ENCODE measurements at regions of chr1 and their contacts with region 1.

Region 1: DNA sequence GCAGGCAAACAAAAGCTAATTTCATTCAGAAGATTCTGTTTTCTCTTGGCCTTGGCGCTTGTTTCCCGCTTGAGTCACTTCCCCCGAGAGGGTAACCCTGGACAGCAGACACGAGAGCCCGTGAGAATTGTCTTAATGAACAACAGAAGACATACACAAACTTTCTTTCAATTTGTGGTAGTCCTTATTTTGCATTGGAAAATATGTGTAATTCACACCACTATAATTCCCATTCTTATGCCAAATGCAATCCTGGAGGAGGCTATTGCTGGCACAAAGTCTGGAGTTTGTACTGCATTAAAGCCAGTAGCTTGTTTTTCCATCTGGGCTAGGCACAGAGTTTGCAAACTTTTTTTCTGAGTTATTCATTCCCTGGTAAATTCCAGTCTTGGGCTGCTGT is 109.8 kb upstream of the IVNS1ABP start:
- DNase-seq: no peak
- H3K4me3 ChIP-seq: no peak overlapping the region
- CTCF ChIP-seq: no peak

Region 2: DNA sequence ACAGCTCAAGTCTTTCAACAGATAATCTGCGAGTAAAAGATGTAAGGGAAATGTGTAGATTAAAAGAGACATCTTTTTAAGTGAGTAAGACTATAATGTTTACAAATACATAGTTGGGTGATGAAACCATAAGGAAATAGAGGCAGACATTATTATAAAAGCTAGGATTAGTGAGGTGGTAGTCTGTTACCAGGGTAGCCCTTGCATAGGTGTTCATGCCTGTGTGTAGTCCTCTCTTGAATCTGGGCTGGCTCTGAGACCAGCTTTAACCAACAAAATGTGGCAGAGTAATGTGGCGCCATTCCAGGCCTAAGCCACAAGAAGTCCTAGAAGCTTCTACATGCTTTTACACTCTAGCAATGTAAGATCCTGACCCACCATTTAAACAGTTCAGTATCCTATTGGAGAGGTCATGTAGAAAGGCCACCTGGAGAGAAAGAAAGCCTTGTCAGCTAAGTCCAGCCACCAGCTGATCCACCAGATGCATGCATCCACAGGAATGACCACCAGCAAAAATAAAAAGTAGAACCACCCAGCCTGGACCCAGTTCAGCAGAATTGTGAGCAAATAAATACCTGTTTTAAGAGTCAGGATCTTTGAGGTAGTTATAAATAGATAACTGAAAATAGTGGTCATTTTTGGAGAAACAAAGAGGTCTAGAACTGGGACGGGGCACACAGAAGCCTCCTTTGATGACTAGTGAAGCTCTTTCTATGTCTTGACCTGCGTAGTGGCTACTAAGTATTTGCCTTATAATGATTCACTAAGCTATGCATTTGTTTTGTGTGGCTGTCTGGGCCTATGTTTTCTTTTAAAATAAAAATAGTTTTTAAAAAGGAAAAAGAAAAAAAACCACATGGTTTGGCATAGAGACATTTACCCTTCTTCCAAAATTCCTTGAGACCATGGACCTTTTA is 460.6 kb before region 1 on chr1:
- in situ Hi-C with region 1: no loop called
- DNase-seq: no peak
- H3K4me3 ChIP-seq: no peak overlapping the region
- CTCF ChIP-seq: no peak

Region 3: GRCh38 chr1:185317034-185317885 is 109.6 kb before region 1 on chr1 and contains the start of gene IVNS1ABP:
- in situ Hi-C with region 1: no loop called
- DNase-seq: peak; percentile 76
- H3K4me3 ChIP-seq: peak within 1 kb of the TSS; percentile 95
- CTCF ChIP-seq: peak; percentile 8

Region 4: DNA sequence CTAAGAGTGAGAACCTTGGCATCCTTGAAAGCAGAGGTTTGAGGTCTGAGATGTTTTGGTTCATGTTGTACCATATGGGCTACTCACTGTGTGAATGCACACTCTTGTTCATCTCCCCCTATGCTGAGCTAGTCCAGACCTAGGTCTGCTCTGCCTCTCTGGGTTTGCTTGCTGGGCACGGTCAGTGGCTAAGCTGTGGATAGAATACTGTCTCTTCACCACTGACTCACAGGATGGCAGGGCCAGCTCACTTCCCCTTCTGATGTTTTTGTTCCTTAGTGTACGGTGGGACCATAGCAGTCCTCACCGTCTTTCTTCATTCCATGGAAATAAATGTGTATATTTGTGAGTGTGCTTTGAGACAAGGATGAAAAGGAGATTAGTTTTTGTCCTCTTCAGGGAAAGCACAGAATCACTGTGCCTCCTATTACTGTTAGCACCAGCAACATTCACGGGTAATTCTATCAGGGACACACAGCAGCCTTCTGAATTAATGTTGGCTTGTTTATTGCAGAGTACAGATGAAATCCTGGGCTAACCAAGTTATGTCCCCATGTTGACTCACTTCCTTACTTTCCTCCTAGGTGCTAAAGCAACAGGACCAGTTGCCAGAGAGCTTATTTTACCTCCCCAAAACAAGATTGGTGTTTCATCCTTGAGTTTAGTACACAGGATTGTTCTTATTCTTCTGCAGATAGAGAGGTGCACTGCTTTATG is 52.9 kb before region 1 on chr1:
- in situ Hi-C with region 1: loop called (anchors 5 kb)
- DNase-seq: no peak
- H3K4me3 ChIP-seq: no peak overlapping the region
- CTCF ChIP-seq: no peak